ENCODE measurements at regions of chr4 and their contacts with region 1.

Region 1: GRCh38 chr4:158845311-158846041 is 76.7 kb downstream of the FNIP2 start:
- DNase-seq: no peak
- H3K4me3 ChIP-seq: no peak overlapping the region
- H3K27ac ChIP-seq: peak overlapping the region in 8 of 59 donors; percentile 8 to 29 (median 20)
- H3K27me3 ChIP-seq: no peaks in the 10 kb centered on the region
- CTCF ChIP-seq: no peak

Region 2: GRCh38 chr4:158782551-158783360 is 62.7 kb before region 1 on chr4:
- intact Hi-C with region 1: loop called in 1 of 2 experiments (anchors 5 kb)
- DNase-seq: no peak
- H3K4me3 ChIP-seq: no peak overlapping the region
- H3K27ac ChIP-seq: peak overlapping the region in 32 of 59 donors; percentile 0 to 60 (median 22)
- H3K27me3 ChIP-seq: no peaks in the 10 kb centered on the region
- CTCF ChIP-seq: no peak

Region 3: DNA sequence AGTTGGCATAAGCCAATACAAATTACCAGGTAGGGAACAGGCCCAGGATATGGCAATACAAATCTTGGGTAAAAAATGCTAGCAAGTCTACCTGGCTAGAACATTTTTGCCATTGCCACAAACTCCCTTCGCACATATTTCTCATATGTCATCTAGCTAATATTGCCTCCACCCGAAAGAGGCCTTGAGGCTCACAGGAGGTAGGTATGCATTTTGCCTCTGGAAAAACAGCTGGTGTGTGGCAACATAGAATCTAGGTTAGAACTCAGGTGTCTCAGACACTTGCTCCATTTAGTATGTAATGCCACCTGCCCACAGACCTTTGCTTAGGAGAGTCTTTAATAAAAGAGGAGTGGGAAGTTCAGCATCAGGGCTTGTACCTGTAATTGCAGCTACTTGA is 241.1 kb after region 1 on chr4:
- intact Hi-C with region 1: no loop called
- DNase-seq: no peak
- H3K4me3 ChIP-seq: no peak overlapping the region
- H3K27ac ChIP-seq: no peak overlapping the region
- H3K27me3 ChIP-seq: no peaks in the 10 kb centered on the region
- CTCF ChIP-seq: no peak